Endothelial cell of umbilical vein (primary cell): ENCODE measurements at regions of chr3 and their contacts with region 1.

Region 1: DNA sequence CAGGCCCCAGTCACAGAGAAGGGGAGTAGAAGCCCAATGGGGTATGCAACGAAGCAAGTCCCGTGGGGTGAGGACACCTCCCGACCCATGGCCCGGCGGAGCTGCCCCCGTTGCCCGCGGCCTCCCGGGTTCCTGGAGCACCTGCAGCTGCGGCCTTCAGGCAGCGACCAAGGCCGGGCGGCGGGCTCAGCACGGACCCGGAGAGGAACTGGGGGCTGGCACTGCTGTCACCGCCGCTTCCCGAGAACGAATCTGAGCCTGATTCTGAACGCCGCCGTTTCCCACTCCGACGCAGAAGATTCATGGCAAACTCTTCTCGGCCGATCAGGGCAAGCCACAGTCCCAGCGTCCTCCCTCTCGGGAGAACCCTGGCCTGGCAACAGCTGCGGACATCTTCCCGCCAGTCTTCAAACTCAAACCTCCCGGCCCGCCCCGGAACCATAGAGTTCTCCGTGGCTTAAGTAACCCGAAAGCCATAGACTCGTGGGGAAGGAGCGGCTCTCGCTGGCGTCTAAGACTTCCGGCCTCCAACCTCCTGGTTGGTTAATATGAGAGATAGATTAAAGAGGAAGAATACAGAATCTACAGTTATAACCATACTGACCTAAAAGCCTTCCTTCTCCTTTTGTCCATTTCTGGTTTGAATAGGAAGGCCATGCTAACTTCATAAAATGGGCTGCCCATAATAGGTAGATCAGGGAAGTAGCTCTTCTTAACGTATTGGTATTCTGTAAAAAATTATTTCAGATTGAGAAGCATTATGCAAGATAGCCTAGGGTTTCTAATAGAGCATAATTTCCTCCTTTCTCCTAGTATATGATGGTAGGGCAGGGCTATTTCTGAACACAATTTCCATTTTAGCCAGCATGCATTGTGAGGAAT is at the start of gene POLQ:
- DNase-seq: peak; percentile 91
- H3K4me3 ChIP-seq: peak within 1 kb of the TSS; percentile 65 to 93 (median 67)
- H3K27ac ChIP-seq: peak within 1 kb of the TSS; percentile 17
- H3K4me1 ChIP-seq: peaks cover 12% of the 10 kb centered on the region
- H3K27me3 ChIP-seq: no peaks in the 10 kb centered on the region
- CTCF ChIP-seq: no peak
- POLR2A ChIP-seq: peak; percentile 60
- total RNA-seq, gene POLQ: 9.5 and 10.8 TPM in 2 replicates

Region 2: GRCh38 chr3:121436641-121437040 is 109.2 kb before region 1 on chr3:
- CTCF ChIA-PET with region 1: no interaction called
- POLR2A ChIA-PET with region 1: no interaction called
- dilution Hi-C with region 1: no loop called
- intact Hi-C with region 1: no loop called
- DNase-seq: peak; percentile 18
- H3K4me3 ChIP-seq: no peak overlapping the region
- H3K27ac ChIP-seq: no peak overlapping the region
- H3K4me1 ChIP-seq: no peaks in the 10 kb centered on the region
- H3K27me3 ChIP-seq: no peaks in the 10 kb centered on the region
- CTCF ChIP-seq: no peak
- POLR2A ChIP-seq: no peak

Region 3: GRCh38 chr3:121520510-121520909 is 25.3 kb before region 1 on chr3:
- CTCF ChIA-PET with region 1: no interaction called
- POLR2A ChIA-PET with region 1: no interaction called
- dilution Hi-C with region 1: no loop called
- intact Hi-C with region 1: no loop called
- DNase-seq: no peak
- H3K4me3 ChIP-seq: no peak overlapping the region
- H3K27ac ChIP-seq: no peak overlapping the region
- H3K4me1 ChIP-seq: no peaks in the 10 kb centered on the region
- H3K27me3 ChIP-seq: no peaks in the 10 kb centered on the region
- CTCF ChIP-seq: no peak
- POLR2A ChIP-seq: no peak

Region 4: DNA sequence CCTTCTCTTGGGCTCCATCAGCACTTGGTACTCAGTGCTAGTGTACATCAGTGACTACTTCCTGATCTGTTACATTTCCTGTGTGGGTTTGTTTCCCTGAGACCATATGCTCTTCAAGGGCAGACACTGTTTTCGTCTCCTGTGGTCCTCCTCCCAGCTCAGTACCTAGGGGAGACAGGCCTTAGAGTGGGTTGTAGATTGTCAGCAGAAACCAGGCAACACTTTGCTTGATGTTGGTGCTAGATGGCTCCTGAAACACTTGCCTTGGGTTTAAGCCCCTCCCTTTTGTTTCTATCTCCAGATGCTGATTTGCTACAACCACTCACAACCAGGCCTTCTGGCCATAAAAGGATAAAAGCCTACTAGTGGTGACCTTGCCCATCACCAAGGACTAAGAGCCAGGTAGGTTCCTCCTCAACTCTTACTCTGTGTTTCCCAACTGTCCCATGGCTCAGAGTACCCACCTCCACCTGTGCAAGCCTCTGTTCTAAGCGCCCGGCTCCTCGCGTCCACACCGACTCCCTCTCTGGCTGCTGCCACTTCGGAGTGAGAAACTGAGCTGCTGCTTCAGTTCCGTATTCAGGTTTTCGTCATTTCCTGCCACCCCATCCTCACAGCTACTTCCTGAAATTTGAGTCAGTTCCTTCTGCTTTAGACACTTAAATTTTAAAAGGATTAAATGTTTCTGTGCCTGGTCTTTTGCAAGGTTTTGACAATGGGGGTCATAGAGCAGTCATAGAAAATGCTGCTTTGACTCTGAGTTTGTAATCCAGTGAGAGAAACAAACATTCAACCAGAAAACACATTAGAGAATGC is 114.7 kb after region 1 on chr3 and contains the start of gene HCLS1:
- CTCF ChIA-PET with region 1: no interaction called
- POLR2A ChIA-PET with region 1: no interaction called
- dilution Hi-C with region 1: no loop called
- intact Hi-C with region 1: loop called (anchors 5 kb)
- DNase-seq: peak; percentile 72
- H3K4me3 ChIP-seq: peak within 1 kb of the TSS; percentile 34 to 76 (median 36)
- H3K27ac ChIP-seq: peak within 1 kb of the TSS; percentile 89
- H3K4me1 ChIP-seq: peaks cover 22% of the 10 kb centered on the region
- H3K27me3 ChIP-seq: no peaks in the 10 kb centered on the region
- CTCF ChIP-seq: no peak
- POLR2A ChIP-seq: peak; percentile 85
- total RNA-seq, gene HCLS1: 63.5 and 68.5 TPM in 2 replicates

Region 5: DNA sequence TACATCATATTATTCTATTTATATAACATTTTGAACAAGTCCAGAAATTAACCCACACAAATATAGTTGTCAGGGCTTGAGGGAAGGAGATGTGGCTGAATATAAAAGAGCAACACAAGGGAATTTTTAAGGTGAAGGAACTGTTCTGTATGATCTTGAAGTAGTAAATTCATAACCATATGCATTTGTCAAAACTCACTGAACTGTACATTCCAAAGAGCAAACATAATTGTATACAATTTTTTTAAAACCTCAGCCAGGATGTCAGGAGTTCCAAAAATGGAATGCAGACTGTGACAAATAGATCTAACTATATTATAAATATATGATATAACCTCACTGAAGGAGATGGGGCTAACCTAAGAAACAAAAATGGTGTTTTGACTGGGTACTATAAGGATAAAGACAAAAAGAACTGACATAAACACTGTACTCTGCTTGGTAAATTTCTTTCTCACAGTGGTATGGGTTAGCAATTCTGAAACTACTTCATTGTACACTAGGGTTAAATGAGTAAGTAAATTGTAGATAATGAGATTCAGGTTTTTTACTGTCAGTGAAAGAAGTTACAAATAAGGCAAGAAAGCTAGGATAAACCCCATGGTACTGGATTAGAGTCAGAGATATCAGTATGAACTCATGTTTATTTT is 189.4 kb after region 1 on chr3:
- CTCF ChIA-PET with region 1: no interaction called
- POLR2A ChIA-PET with region 1: no interaction called
- dilution Hi-C with region 1: no loop called
- intact Hi-C with region 1: no loop called
- DNase-seq: no peak
- H3K4me3 ChIP-seq: no peak overlapping the region
- H3K27ac ChIP-seq: no peak overlapping the region
- H3K4me1 ChIP-seq: no peaks in the 10 kb centered on the region
- H3K27me3 ChIP-seq: no peaks in the 10 kb centered on the region
- CTCF ChIP-seq: no peak
- POLR2A ChIP-seq: no peak

Region 6: DNA sequence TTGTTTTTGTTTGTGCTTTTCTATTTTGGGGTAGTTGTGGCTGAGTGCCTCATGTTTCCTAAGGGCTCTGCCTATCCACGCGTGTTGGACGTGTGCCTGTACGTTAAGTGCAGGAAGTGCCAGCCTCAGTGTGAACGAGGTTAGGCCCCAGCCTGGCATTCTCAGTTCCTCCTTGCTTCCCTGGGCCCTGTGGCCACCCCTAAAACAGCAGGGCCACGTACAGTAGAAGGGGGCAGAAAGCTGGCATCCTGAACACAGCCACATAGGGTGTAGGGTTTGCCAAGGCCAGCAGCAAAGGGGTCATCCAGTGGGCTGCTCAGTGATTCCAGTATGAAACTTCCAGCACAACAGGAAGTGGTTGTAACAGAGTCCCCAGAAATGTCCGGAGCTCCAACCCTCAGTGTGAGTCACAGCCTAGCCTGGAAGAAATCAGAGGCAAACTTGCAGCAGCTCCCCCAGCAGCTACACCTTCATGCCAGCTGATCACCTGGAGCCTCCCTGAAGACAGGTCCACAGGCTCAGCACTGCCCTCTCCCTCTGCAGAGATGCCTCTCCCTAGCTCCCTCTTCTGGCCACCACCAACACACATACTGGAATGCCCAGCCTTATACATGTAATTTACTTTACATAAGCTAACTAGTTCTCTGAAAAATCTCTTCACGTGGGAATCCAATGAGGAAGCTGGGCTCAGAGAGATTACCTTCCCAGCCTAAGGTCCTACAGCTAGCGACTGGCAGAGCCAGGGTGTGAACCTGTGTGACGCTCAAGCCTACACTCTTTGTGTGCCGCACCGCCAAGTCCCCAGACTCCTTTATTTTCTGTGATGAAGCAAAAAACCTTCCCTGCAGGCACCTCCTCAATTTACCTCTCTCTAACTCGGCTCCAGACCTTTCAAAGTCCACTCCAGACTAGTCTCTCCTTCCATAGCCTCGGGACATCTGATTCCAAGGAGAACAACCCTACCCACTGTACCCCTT is 449.6 kb after region 1 on chr3:
- CTCF ChIA-PET with region 1: no interaction called
- POLR2A ChIA-PET with region 1: no interaction called
- dilution Hi-C with region 1: no loop called
- intact Hi-C with region 1: loop called (anchors 1 kb)
- DNase-seq: peak; percentile 74
- H3K4me3 ChIP-seq: no peak overlapping the region
- H3K27ac ChIP-seq: peak overlapping the region; percentile 63
- H3K4me1 ChIP-seq: peaks cover 51% of the 10 kb centered on the region
- H3K27me3 ChIP-seq: no peaks in the 10 kb centered on the region
- CTCF ChIP-seq: peak; percentile 32 to 62
- POLR2A ChIP-seq: no peak

Region 7: DNA sequence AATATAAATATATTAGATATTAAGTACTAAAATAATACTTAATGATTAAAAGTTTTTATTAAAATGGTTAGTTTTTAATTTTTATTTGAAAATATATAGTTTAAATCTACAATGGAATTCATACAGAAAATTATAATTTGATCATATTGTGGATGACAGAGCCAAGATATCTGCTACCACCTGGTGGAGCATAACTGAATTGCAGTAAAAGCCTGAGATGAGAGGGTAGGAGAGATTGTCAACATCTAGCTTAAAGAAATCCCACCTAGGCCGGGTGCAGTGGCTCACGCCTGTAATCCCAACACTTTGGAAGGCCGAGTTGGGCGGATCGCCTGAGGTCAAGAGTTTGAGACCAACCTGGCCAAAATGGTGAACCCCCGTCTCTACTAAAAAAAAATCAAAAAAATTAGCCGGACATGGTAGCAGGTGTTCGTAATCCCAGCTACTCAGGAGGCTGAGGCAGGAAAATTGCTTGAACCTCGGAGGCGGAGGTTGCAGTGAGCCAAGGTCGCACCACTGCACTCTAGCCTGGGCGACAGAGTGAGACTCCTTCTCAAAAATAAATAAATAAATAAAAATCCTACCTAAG is 754.2 kb after region 1 on chr3:
- CTCF ChIA-PET with region 1: interaction called, 34 read pairs
- POLR2A ChIA-PET with region 1: no interaction called
- dilution Hi-C with region 1: no loop called
- intact Hi-C with region 1: loop called (anchors 1 kb)
- DNase-seq: peak; percentile 17
- H3K4me3 ChIP-seq: no peak overlapping the region
- H3K27ac ChIP-seq: no peak overlapping the region
- H3K4me1 ChIP-seq: no peaks in the 10 kb centered on the region
- H3K27me3 ChIP-seq: peaks cover 0 to 1% of the 10 kb centered on the region in 2 experiments
- CTCF ChIP-seq: peak; percentile 40 to 42
- POLR2A ChIP-seq: no peak

Region 8: DNA sequence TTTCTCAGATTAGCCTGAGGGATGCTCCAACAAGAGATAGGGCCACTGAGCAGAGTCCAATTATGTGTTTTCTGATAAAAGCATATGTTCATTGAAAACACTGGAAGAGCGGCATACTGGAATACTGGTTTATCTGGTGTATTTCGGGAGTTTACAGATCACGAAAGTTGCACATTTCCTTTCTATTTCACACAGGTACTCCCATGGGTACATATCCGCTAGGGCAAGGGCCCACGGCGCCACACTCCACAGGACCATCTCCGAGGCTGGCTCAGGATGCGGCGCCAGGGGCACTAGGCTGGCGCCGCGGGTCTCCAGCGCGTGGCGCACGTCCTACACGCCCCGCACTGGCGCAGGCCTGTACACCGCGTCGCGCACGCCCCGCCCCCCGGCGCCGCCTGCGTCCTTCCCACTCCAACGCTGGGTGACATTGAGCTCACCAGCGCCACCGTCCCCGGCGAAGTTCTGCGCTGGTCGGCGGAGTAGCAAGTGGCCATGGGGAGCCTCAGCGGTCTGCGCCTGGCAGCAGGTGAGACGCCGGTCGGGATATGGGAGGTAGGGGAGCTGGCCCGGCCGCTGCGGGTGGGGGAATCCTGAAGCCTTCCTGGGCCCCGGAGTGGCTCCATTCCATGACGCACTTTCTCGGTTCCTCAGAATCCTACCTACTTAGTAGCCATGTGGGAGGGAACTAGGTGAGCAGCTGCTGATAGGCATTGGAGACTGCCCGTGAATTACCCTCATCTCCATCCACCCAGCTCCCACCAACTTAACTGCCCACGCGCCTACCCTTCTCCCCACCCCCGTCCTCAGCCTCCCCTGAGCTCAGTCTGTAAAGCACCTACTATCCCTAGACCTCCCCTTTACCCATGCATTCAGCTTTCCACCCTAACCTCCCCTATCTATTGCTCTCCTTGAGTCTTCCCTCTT is 838.2 kb after region 1 on chr3 and contains the start of gene FAM162A:
- CTCF ChIA-PET with region 1: interaction called, 7 read pairs
- POLR2A ChIA-PET with region 1: no interaction called
- dilution Hi-C with region 1: no loop called
- intact Hi-C with region 1: loop called (anchors 1 kb)
- DNase-seq: peak; percentile 96
- H3K4me3 ChIP-seq: peak within 1 kb of the TSS; percentile 69 to 97 (median 77)
- H3K27ac ChIP-seq: peak within 1 kb of the TSS; percentile 58
- H3K4me1 ChIP-seq: peaks cover 16% of the 10 kb centered on the region
- H3K27me3 ChIP-seq: no peaks in the 10 kb centered on the region
- CTCF ChIP-seq: peak; percentile 53 to 69
- POLR2A ChIP-seq: peak; percentile 86
- total RNA-seq, gene FAM162A: 23.4 and 25.9 TPM in 2 replicates

Region 9: DNA sequence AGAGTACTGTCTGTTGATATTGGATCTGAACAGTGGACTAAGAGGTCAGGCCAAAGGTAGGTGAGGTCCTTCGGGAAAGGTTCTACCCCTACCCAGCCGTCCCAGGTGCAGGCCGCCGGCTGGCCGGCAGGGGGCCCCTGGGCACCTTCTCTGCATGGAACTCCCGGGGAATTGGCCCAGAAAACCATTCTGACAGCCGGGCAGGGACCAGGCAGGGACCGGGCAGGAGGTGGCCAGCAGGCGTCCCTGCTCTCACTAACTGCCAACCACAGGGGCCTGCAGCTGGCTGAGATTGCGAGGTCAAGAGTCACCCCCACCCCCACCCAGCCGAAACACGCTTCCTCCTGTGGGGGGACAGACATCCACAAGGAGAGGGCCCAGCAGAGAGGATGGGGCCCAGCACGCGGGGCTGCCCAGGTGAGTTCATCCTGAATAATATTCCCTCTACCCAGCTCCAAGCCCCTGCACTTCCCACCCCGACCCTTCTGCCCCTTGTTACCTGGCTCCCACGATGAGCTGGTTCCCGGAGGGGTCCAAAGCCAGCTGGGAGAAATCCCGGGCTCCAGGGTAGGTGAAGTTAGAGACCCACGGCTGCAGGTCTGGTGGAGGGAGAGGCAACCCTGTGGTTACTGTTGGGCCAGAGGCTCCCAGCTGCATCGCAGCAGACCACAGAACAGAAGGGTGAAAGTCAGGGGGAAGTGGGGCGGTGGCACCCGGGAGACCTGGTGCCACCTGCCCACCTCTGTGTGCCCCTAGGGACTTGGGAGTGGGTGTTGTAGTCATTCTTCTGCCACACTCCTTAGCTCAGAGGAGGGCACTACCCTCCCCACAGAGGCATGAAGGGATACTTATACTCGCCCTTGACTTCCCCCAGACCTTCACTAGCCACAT is 1397.4 kb after region 1 on chr3:
- CTCF ChIA-PET with region 1: no interaction called
- POLR2A ChIA-PET with region 1: no interaction called
- dilution Hi-C with region 1: no loop called
- intact Hi-C with region 1: loop called (anchors 2 kb)
- DNase-seq: peak; percentile 17
- H3K4me3 ChIP-seq: no peak overlapping the region
- H3K27ac ChIP-seq: no peak overlapping the region
- H3K4me1 ChIP-seq: peaks cover 11% of the 10 kb centered on the region
- H3K27me3 ChIP-seq: peaks cover 2 to 4% of the 10 kb centered on the region in 2 experiments
- CTCF ChIP-seq: peak; percentile 85 to 91
- POLR2A ChIP-seq: no peak

Region 10: DNA sequence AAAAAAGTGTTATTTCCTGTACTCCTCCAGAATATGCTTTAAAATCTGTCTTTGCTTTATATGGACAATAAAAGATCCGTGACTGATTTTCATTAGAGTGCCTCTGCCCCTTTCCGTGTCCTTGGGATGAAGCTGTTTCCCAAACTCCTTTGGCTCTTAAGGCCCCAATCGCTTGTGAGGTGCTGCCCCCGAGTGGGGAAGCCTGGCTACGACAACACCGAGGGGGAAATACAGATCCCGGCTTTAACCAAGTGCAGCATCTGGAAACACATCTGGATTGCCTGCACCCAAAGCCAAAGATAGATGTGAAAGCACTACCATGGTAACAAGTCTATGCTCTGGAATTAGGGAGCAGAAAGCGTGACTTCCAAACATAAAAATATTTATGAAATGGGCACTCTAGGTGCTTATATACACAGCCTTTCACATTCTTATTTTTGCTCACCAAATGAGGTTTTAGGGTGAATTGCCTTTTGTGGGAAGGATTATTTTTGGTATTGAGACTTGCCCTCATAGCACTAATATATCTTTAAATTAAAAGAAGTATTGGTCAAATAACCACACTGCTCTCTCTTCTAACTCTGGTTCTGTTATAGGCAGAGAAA is 1943.7 kb after region 1 on chr3:
- CTCF ChIA-PET with region 1: interaction called, 11 read pairs
- POLR2A ChIA-PET with region 1: no interaction called
- dilution Hi-C with region 1: no loop called
- intact Hi-C with region 1: no loop called
- DNase-seq: peak; percentile 67
- H3K4me3 ChIP-seq: no peak overlapping the region
- H3K27ac ChIP-seq: no peak overlapping the region
- H3K4me1 ChIP-seq: no peaks in the 10 kb centered on the region
- H3K27me3 ChIP-seq: no peaks in the 10 kb centered on the region
- CTCF ChIP-seq: peak; percentile 85 to 89
- POLR2A ChIP-seq: no peak